Right ventricle myocardium inferior (tissue), 1 donor: ENCODE measurements at regions of chrX and their contacts with region 1.

Region 1: GRCh38 chrX:136608295-136609171 is 39.4 kb upstream of the CD40LG start:
- DNase-seq: peak; percentile 72
- ATAC-seq: no peak

Region 2: GRCh38 chrX:136480383-136480782 is 128.2 kb before region 1 on chrX:
- intact Hi-C with region 1: no loop called
- DNase-seq: no peak
- ATAC-seq: peak; percentile 23

Region 3: GRCh38 chrX:136694431-136695087 is 86.0 kb after region 1 on chrX:
- intact Hi-C with region 1: loop called (anchors 10 kb)
- DNase-seq: no peak
- ATAC-seq: no peak

Region 4: GRCh38 chrX:136920001-136920400 is 311.5 kb after region 1 on chrX:
- intact Hi-C with region 1: loop called (anchors 2 kb)
- DNase-seq: no peak
- ATAC-seq: no peak